ENCODE measurements at regions of chr10 and their contacts with region 1.

Region 1: DNA sequence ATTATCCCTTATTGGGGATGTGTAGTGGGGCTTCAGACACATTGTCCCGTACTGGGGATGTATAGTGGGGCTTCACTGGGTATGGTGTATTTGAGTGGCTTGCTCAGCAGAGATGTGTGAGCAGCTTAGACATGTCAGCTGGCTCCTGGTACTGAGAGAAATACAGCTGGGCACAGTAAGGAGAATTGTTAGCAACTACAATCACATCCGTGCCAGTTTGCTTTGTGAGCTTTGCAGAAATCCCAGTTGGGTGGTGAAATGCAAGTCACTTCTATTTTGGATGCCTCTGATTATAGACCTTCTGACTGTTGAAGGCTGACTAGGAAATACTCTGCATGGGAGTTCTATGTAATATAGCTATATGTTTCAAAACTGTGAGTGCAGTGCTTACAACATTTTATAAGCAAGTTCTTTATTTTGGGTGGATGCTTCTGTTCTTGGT is 10.8 kb downstream of the CCNY start:
- DNase-seq: no peak
- H3K4me3 ChIP-seq: no peak overlapping the region
- H3K27ac ChIP-seq: no peak overlapping the region
- H3K4me1 ChIP-seq: no peaks in the 10 kb centered on the region
- H3K27me3 ChIP-seq: no peaks in the 10 kb centered on the region
- CTCF ChIP-seq: no peak
- POLR2A ChIP-seq: no peak

Region 2: GRCh38 chr10:35517431-35518181 is 170.5 kb after region 1 on chr10:
- CTCF ChIA-PET with region 1: no interaction called
- POLR2A ChIA-PET with region 1: interaction called, 10 read pairs
- dilution Hi-C with region 1: no loop called
- intact Hi-C with region 1: no loop called
- DNase-seq: no peak
- H3K4me3 ChIP-seq: no peak overlapping the region
- H3K27ac ChIP-seq: no peak overlapping the region
- H3K4me1 ChIP-seq: peaks cover 7% of the 10 kb centered on the region
- H3K27me3 ChIP-seq: no peaks in the 10 kb centered on the region
- CTCF ChIP-seq: no peak
- POLR2A ChIP-seq: no peak

Measured in endothelial cell of umbilical vein (primary cell).